Natural killer cell (primary cell): ENCODE measurements at regions of chr11 and their contacts with region 1.

Region 1: GRCh38 chr11:78188286-78189173 is at the starts of genes KCTD21 and USP35:
- DNase-seq: peak; percentile 85 to 95
- ATAC-seq: peak; percentile 95 to 99 (median 96)
- H3K4me3 ChIP-seq: peak within 1 kb of the TSS; percentile 97
- H3K4me3 Mint-ChIP-seq: peak within 1 kb of the TSS; percentile 99
- H3K27ac ChIP-seq: peak within 1 kb of the TSS; percentile 71
- H3K27ac Mint-ChIP-seq: peak within 1 kb of the TSS; percentile 87 to 93
- H3K4me1 ChIP-seq: peaks cover 23% of the 10 kb centered on the region
- H3K4me1 Mint-ChIP-seq: peaks cover 29 to 50% of the 10 kb centered on the region in 2 donors
- H3K27me3 ChIP-seq: no peaks in the 10 kb centered on the region
- H3K27me3 Mint-ChIP-seq: no peaks in the 10 kb centered on the region
- CTCF ChIP-seq: no peak
- total RNA-seq, gene KCTD21: 1.7 to 2.7 (median 2.2) TPM
- total RNA-seq, gene USP35: 6.1 to 8.5 (median 8.1) TPM

Region 2: DNA sequence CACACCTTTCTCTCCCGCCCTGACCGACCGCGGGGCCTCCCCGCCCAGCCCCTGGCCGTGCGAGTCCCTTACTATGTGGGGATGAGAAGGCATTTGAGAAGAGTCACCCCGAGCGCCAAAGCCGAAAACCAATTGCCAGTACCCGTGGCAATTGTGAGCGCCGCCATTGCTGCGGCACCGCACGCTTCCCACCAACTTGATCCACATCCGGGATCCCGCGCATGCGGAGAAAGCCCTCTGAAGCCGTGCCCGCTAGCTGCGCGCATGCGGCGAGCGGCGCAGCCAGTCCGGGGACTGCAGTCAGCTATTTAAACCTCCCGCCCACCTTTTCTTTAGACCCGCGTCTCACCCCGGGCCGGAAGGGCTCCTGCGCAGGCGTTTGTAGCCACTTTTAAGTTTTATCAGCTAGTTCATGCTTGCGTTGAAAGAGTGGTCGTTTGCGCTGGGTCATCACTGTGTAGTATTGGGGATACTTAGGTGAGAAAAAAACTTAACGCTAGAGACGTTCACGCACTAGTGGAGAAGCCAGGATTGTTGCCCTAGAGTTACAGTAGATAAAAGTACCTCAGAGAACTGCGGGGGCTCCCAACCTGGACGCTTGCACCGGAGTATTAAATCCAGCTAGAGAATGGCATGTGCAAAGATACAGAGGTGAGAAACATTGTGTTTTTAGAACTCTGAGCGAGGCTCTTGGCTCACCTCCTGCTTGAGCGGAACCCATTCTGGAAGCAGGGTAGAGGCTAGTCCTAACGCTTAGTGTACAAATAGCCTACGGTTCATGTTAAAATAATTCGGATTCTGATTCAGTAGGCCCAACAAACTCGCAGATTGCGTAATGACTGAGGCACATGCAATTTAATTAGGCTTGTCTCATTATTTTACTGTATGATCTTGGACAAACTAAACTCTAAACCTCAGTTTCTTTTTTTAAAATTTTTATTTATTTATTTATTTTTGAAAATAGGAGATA is 48.8 kb before region 1 on chr11 and contains the start of gene ALG8:
- intact Hi-C with region 1: loop called (anchors 1 kb)
- DNase-seq: peak; percentile 96 to 98
- ATAC-seq: peak; percentile 96 to 97 (median 96)
- H3K4me3 ChIP-seq: peak within 1 kb of the TSS; percentile 73
- H3K4me3 Mint-ChIP-seq: peak within 1 kb of the TSS; percentile 95
- H3K27ac ChIP-seq: peak within 1 kb of the TSS; percentile 54
- H3K27ac Mint-ChIP-seq: peak within 1 kb of the TSS; percentile 80 to 91
- H3K4me1 ChIP-seq: peaks cover 14% of the 10 kb centered on the region
- H3K4me1 Mint-ChIP-seq: peaks cover 29 to 30% of the 10 kb centered on the region in 2 donors
- H3K27me3 ChIP-seq: no peaks in the 10 kb centered on the region
- H3K27me3 Mint-ChIP-seq: no peaks in the 10 kb centered on the region
- CTCF ChIP-seq: no peak
- total RNA-seq, gene ALG8: 19.2 to 20.1 (median 19.8) TPM

Region 3: GRCh38 chr11:78202733-78203167 is 14.2 kb after region 1 on chr11:
- intact Hi-C with region 1: loop called (anchors 2 kb)
- DNase-seq: peak in 1 of 2 donors; percentile 89
- ATAC-seq: peak; percentile 77 to 86 (median 85)
- H3K4me3 ChIP-seq: no peak overlapping the region
- H3K4me3 Mint-ChIP-seq: peak overlapping the region; percentile 72
- H3K27ac ChIP-seq: peak overlapping the region; percentile 31
- H3K27ac Mint-ChIP-seq: peak overlapping the region; percentile 80 to 82
- H3K4me1 ChIP-seq: peaks cover 18% of the 10 kb centered on the region
- H3K4me1 Mint-ChIP-seq: peaks cover 16 to 19% of the 10 kb centered on the region in 2 donors
- H3K27me3 ChIP-seq: no peaks in the 10 kb centered on the region
- H3K27me3 Mint-ChIP-seq: no peaks in the 10 kb centered on the region
- CTCF ChIP-seq: no peak

Region 4: DNA sequence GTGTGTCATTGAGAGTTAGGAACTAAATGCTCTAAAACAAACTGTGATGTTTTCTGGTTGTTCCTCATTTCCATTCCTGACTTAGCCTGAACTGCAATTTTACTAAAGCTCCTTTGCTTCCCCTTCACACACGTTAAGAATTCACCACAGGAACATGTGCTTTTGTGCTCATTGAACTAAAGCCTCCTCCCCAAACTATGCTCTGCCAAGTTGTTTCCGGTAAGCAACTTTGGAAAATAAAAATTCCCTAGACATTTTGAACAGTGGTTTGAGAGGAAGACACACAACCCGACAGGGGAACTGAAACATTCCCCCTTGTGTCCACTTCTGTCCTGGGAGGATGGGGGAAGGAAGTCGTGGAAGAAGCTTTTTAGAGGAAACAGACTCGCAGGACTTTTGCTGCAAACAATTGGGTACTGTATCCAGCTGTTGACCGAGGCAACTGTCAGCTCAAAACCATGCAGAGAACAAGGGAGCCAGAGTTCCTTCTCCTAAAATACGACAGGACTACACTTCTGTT is 162.2 kb after region 1 on chr11:
- intact Hi-C with region 1: no loop called
- DNase-seq: peak in 1 of 2 donors; percentile 7
- ATAC-seq: peak in 1 of 3 donors; percentile 48
- H3K4me3 ChIP-seq: no peak overlapping the region
- H3K4me3 Mint-ChIP-seq: no peak overlapping the region
- H3K27ac ChIP-seq: peak overlapping the region; percentile 10
- H3K27ac Mint-ChIP-seq: no peak overlapping the region
- H3K4me1 ChIP-seq: peaks cover 11% of the 10 kb centered on the region
- H3K4me1 Mint-ChIP-seq: peaks cover 11 to 12% of the 10 kb centered on the region in 2 donors
- H3K27me3 ChIP-seq: no peaks in the 10 kb centered on the region
- H3K27me3 Mint-ChIP-seq: peaks cover 0 to 6% of the 10 kb centered on the region in 2 donors
- CTCF ChIP-seq: no peak